ENCODE measurements at regions of chr12 and their contacts with region 1.

Region 1: GRCh38 chr12:20822415-20822814 is 11.9 kb downstream of the SLCO1B3 start:
- DNase-seq: peak; percentile 70
- H3K4me3 Mint-ChIP-seq: peak overlapping the region; percentile 67
- H3K27ac Mint-ChIP-seq: peak overlapping the region; percentile 93
- H3K4me1 Mint-ChIP-seq: peaks cover 37% of the 10 kb centered on the region
- H3K27me3 Mint-ChIP-seq: no peaks in the 10 kb centered on the region
- CTCF ChIP-seq: no peak

Region 2: GRCh38 chr12:20369305-20370005 is 453.0 kb before region 1 on chr12:
- CTCF ChIA-PET with region 1: no interaction called
- intact Hi-C with region 1: loop called (anchors 10 kb)
- DNase-seq: peak; percentile 75
- H3K4me3 Mint-ChIP-seq: peak overlapping the region; percentile 94
- H3K27ac Mint-ChIP-seq: peak overlapping the region; percentile 78
- H3K4me1 Mint-ChIP-seq: peaks cover 35% of the 10 kb centered on the region
- H3K27me3 Mint-ChIP-seq: no peaks in the 10 kb centered on the region
- CTCF ChIP-seq: no peak